CD4-positive, alpha-beta memory T cell (primary cell): ENCODE measurements at regions of chr14 and their contacts with region 1.

Region 1: DNA sequence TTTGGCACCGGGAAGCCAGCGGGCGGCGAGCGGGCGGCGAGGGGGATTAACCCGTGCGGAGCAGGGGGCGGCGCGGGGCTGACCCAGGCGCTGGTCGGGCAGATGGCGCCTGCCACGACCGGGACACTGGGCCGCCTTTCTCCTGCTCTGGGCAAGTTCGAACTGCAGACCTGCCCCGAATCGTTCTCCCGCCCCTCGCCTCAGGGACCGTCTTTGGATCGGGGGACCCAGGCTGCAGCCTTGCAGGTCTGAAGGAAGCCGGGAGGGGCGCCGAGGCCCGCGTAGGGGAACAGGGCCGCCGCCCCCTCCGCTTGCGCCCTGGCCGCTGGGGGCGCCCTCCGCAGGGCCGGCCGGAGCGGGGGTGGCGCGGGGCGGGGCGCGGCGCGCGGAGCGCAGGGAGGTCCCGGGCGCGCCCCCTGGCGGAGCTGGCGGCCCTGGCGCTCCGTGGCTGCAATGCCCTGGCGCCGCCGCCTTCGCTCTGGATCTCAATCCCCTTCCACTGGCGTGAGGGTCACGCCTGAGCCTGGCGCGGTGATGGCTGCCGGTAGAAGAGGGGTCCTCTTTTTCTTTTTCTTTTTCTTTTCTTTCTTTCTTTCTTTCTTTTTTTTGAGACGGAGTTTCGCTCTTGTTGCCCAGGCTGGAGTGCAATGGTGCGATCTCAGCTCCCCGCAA is 449 bp upstream of the LTBP2 start:
- DNase-seq: peak; percentile 72 to 89 (median 85)
- H3K4me3 ChIP-seq: peak overlapping the region; percentile 17 to 72
- H3K4me3 Mint-ChIP-seq: peak overlapping the region; percentile 67 to 81 (median 78)
- H3K27ac ChIP-seq: no peak overlapping the region
- H3K27ac Mint-ChIP-seq: peak overlapping the region in 1 of 7 donors; percentile 42
- H3K4me1 ChIP-seq: peaks cover 31% of the 10 kb centered on the region
- H3K4me1 Mint-ChIP-seq: peaks cover 24 to 47% (median 38%) of the 10 kb centered on the region in 4 donors
- H3K27me3 ChIP-seq: no peaks in the 10 kb centered on the region
- H3K27me3 Mint-ChIP-seq: peaks cover 4 to 5% of the 10 kb centered on the region in 2 donors

Region 2: DNA sequence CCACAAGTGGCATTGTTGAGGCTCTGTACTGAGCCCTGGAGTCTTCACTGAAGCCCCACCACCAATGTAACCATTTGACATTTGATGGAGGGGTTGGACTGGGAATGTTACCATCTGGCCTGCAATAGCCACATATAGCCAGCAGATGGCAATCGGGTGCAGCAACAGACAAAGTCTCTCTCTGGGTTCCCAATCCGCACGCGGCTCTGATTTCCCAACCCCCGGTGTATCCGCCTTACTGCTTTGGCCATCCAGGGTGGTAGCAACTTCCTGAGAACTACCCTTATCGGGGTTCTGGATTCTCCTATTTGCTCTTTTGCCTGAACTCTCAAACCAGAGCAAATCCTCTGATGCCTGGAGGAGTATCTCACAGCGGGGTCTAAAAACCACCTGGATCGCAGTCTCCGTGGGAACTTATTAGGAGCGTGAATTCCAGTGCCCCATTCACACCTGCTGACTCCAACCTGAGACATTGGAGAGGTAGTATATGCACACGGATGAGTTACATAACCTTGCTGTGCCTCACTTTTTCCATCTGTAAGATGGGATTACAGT is 250.0 kb before region 1 on chr14:
- CTCF ChIA-PET with region 1: interaction called, 5 read pairs
- POLR2A ChIA-PET with region 1: no interaction called
- intact Hi-C with region 1: loop called (anchors 1 kb)
- DNase-seq: peak; percentile 54 to 59 (median 57)
- H3K4me3 ChIP-seq: no peak overlapping the region
- H3K4me3 Mint-ChIP-seq: no peak overlapping the region
- H3K27ac ChIP-seq: no peak overlapping the region
- H3K27ac Mint-ChIP-seq: peak overlapping the region in 1 of 7 donors; percentile 3
- H3K4me1 ChIP-seq: no peaks in the 10 kb centered on the region
- H3K4me1 Mint-ChIP-seq: no peaks in the 10 kb centered on the region
- H3K27me3 ChIP-seq: peaks cover 5% of the 10 kb centered on the region
- H3K27me3 Mint-ChIP-seq: peaks cover 3 to 8% of the 10 kb centered on the region in 2 donors

Region 3: GRCh38 chr14:74638066-74638465 is 25.6 kb after region 1 on chr14:
- CTCF ChIA-PET with region 1: interaction called, 57 read pairs
- POLR2A ChIA-PET with region 1: interaction called, 4 read pairs
- intact Hi-C with region 1: no loop called
- DNase-seq: no peak
- H3K4me3 ChIP-seq: no peak overlapping the region
- H3K4me3 Mint-ChIP-seq: no peak overlapping the region
- H3K27ac ChIP-seq: no peak overlapping the region
- H3K27ac Mint-ChIP-seq: no peak overlapping the region
- H3K4me1 ChIP-seq: no peaks in the 10 kb centered on the region
- H3K4me1 Mint-ChIP-seq: no peaks in the 10 kb centered on the region
- H3K27me3 ChIP-seq: no peaks in the 10 kb centered on the region
- H3K27me3 Mint-ChIP-seq: peaks cover 0 to 6% of the 10 kb centered on the region in 2 donors

Region 4: GRCh38 chr14:74667758-74668157 is 55.3 kb after region 1 on chr14:
- CTCF ChIA-PET with region 1: interaction called, 11 read pairs
- POLR2A ChIA-PET with region 1: no interaction called
- intact Hi-C with region 1: no loop called
- DNase-seq: no peak
- H3K4me3 ChIP-seq: no peak overlapping the region
- H3K4me3 Mint-ChIP-seq: no peak overlapping the region
- H3K27ac ChIP-seq: no peak overlapping the region
- H3K27ac Mint-ChIP-seq: peak overlapping the region in 2 of 7 donors; percentile 9 to 29
- H3K4me1 ChIP-seq: no peaks in the 10 kb centered on the region
- H3K4me1 Mint-ChIP-seq: no peaks in the 10 kb centered on the region
- H3K27me3 ChIP-seq: no peaks in the 10 kb centered on the region
- H3K27me3 Mint-ChIP-seq: no peaks in the 10 kb centered on the region

Region 5: DNA sequence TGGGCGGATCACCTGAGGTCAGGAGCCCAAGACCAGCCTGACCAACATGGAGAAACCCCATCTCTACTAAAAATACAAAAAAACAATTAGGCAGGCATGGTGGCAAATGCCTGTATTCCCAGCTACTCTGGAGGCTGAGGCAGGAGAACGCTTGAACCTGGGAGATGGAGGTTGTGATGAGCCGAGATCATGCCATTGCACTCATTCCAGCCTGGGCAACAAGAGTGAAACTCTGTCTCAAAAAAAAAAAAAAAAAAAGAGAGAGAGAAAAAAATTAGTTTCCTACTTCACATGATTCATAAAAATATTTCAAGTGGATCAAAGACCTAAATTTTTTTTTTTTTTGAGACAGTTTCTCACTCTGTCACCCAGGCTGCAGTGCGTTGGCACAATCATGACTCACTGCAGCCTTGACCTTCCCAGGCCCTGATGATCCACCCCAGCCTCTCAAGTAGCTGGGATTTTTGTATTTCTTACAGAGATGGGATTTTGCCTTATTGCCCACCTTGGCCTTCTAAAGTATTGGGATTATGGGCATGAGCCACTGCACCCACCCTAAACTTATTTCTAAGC is 125.4 kb after region 1 on chr14:
- CTCF ChIA-PET with region 1: no interaction called
- POLR2A ChIA-PET with region 1: no interaction called
- intact Hi-C with region 1: no loop called
- DNase-seq: no peak
- H3K4me3 ChIP-seq: no peak overlapping the region
- H3K4me3 Mint-ChIP-seq: no peak overlapping the region
- H3K27ac ChIP-seq: no peak overlapping the region
- H3K27ac Mint-ChIP-seq: no peak overlapping the region
- H3K4me1 ChIP-seq: no peaks in the 10 kb centered on the region
- H3K4me1 Mint-ChIP-seq: no peaks in the 10 kb centered on the region
- H3K27me3 ChIP-seq: no peaks in the 10 kb centered on the region
- H3K27me3 Mint-ChIP-seq: no peaks in the 10 kb centered on the region

Region 6: DNA sequence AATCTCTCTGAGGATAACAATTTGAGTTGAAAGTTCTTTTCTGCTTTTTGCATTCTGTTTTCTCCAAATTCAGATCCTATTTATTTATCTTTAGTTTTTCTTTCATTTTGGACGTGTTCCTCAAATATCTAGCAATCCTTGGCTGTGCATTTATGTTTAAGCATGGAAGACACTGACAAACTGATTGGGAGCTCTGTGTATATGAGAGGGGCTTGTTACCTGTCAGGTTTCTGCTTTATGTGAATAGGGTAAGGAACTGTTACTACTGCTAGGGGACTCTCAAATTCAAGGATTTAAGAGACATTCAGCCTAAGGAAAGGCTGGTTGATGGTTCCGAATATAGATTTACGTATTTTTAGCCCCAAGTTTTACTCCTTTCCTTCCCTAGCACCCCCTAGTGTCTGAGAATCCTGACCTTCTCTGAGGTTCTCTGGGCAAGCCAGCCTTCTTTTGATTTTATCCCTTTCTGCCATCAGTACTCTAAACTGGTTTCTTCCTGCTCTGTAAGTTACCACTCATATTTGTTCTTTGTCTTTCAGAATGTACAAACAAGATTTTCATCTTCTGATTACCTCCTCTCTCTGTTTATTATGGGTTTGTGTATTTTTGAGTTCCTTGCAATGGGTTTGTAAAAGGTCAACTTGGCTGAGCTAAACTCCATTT is 181.2 kb after region 1 on chr14:
- CTCF ChIA-PET with region 1: interaction called, 4 read pairs
- POLR2A ChIA-PET with region 1: no interaction called
- intact Hi-C with region 1: loop called (anchors 1 kb)
- DNase-seq: peak in 2 of 5 donors; percentile 6 to 8
- H3K4me3 ChIP-seq: no peak overlapping the region
- H3K4me3 Mint-ChIP-seq: peak overlapping the region; percentile 46 to 89 (median 78)
- H3K27ac ChIP-seq: no peak overlapping the region
- H3K27ac Mint-ChIP-seq: peak overlapping the region; percentile 21 to 93 (median 86)
- H3K4me1 ChIP-seq: peaks cover 29% of the 10 kb centered on the region
- H3K4me1 Mint-ChIP-seq: peaks cover 45 to 56% (median 49%) of the 10 kb centered on the region in 4 donors
- H3K27me3 ChIP-seq: no peaks in the 10 kb centered on the region
- H3K27me3 Mint-ChIP-seq: no peaks in the 10 kb centered on the region

Region 7: GRCh38 chr14:74905375-74906142 is 293.1 kb after region 1 on chr14:
- CTCF ChIA-PET with region 1: interaction called, 28 read pairs
- POLR2A ChIA-PET with region 1: interaction called, 3 read pairs
- intact Hi-C with region 1: loop called (anchors 1 kb)
- DNase-seq: peak; percentile 63 to 77 (median 69)
- H3K4me3 ChIP-seq: no peak overlapping the region
- H3K4me3 Mint-ChIP-seq: no peak overlapping the region
- H3K27ac ChIP-seq: no peak overlapping the region
- H3K27ac Mint-ChIP-seq: peak overlapping the region; percentile 42 to 77 (median 67)
- H3K4me1 ChIP-seq: peaks cover 4% of the 10 kb centered on the region
- H3K4me1 Mint-ChIP-seq: peaks cover 0 to 15% (median 7%) of the 10 kb centered on the region in 4 donors
- H3K27me3 ChIP-seq: no peaks in the 10 kb centered on the region
- H3K27me3 Mint-ChIP-seq: no peaks in the 10 kb centered on the region